Calu3 (cell line): ENCODE measurements at regions of chr1 and their contacts with region 1.

Region 1: GRCh38 chr1:50995651-50996050 is 25.6 kb downstream of the CDKN2C start:
- DNase-seq: no peak
- H3K4me3 Mint-ChIP-seq: no peak overlapping the region
- H3K27ac Mint-ChIP-seq: no peak overlapping the region
- H3K4me1 Mint-ChIP-seq: no peaks in the 10 kb centered on the region
- H3K27me3 Mint-ChIP-seq: no peaks in the 10 kb centered on the region
- CTCF ChIP-seq: no peak

Region 2: GRCh38 chr1:51044834-51045233 is 49.2 kb after region 1 on chr1:
- CTCF ChIA-PET with region 1: no interaction called
- intact Hi-C with region 1: loop called (anchors 5 kb)
- DNase-seq: no peak
- H3K4me3 Mint-ChIP-seq: no peak overlapping the region
- H3K27ac Mint-ChIP-seq: no peak overlapping the region
- H3K4me1 Mint-ChIP-seq: no peaks in the 10 kb centered on the region
- H3K27me3 Mint-ChIP-seq: no peaks in the 10 kb centered on the region
- CTCF ChIP-seq: no peak

Region 3: GRCh38 chr1:51073456-51073855 is 77.8 kb after region 1 on chr1:
- CTCF ChIA-PET with region 1: no interaction called
- intact Hi-C with region 1: no loop called
- DNase-seq: no peak
- H3K4me3 Mint-ChIP-seq: no peak overlapping the region
- H3K27ac Mint-ChIP-seq: no peak overlapping the region
- H3K4me1 Mint-ChIP-seq: peaks cover 20% of the 10 kb centered on the region
- H3K27me3 Mint-ChIP-seq: no peaks in the 10 kb centered on the region
- CTCF ChIP-seq: no peak